Activated B cell treated with CpG ODN at 0.5 μM for 24 hours (primary cell): ENCODE measurements at regions of chr4 and their contacts with region 1.

Region 1: DNA sequence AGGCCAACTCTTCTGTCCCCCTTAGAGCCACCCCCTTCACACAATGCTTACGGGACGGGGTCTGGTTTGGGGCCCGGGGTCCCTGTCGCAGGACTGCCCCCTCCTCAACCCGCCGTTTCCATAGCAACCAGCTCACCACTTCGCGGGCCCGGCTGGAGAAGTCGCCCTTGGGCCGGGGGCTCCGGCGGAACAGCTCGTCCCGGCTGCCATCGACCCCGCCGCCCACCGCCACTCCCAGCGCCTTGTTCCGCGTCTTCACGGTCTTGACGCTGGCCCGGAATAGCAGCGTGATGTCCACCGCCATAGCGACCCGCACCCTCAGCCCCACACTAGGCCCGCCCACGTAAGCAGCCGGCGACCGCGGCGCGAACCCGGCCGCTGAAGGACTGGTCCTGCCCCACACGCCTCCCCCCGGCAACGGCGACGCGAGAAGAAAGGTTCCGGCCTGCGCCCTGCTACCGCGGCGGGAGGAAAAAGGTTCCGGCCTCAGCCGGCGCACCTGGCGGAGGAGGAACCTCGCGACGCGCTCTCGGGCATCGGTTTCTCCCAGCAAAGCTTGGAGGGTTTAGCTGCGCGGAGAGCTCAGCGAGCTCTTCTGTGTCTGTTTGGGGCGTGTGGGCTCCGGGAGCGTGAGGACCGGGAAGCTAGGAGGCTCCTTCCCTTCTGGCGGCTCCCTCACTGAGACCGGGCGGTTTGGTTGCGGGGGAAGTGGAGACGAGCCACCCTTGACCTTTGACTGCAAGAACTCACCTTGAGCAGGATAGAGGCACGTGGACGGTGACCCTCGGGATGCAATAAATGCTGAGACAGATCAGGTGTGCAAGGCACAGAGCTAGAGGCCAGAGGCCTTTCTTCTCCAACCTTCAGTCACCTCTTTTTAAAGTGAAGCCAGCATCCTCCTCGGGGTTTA is at the start of gene STX18:
- DNase-seq: peak; percentile 92
- ATAC-seq: peak; percentile 95
- H3K4me3 Mint-ChIP-seq: peak within 1 kb of the TSS; percentile 90
- H3K27ac Mint-ChIP-seq: peak within 1 kb of the TSS; percentile 88
- H3K4me1 Mint-ChIP-seq: peaks cover 42% of the 10 kb centered on the region
- H3K27me3 Mint-ChIP-seq: no peaks in the 10 kb centered on the region
- CTCF ChIP-seq: no peak
- total RNA-seq, gene STX18: 27.1 and 27.3 TPM in 2 replicates

Region 2: DNA sequence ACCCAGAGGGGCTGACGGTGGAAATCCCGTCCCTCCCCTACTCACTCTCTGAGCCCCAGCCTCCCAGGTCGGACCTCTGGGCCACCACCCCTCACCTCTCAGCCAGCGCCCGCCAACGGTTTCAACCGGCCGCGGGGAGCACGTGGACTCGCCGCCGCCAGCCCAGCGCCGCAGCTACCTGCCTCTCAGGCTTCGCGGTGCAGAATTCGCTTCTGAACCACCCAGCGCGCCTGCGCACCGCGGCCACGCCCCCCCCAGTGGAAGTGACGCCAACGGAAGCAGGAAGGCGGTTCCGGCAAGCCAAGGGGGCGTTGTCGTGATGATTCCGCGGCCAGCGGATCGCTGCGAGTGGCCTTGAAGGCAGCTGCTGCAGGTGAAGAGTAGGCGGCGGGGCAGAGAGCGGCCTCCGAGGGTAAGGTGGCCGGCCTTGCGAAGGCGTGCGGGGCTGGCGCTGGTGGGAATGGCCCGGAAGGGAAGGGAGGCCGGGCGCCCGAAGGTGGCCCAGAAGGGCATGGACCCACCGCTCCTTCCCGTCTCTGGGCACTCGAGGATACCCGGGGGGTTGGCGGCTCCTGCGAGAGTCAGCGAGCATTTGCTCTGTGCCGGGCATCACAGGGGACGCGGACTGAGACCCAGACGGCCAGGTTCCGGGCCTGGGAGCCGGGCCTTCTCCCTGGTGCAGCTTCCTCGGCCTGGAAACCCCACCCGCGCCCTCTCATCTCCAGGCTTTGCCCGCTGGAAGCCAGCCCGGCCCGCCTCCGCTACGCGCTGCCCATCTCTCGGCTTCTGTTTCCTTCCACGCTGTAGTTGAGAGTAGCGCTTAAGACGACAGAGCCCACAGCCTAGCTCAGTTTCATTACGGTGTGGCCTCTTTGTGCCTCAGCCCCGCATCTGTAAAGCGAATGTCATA is 251.7 kb before region 1 on chr4 and contains the starts of genes LYAR and ZBTB49:
- CTCF ChIA-PET with region 1: no interaction called
- POLR2A ChIA-PET with region 1: no interaction called
- intact Hi-C with region 1: loop called (anchors 1 kb)
- DNase-seq: peak; percentile 97
- ATAC-seq: peak; percentile 95
- H3K4me3 Mint-ChIP-seq: peak within 1 kb of the TSS; percentile 96
- H3K27ac Mint-ChIP-seq: peak within 1 kb of the TSS; percentile 72
- H3K4me1 Mint-ChIP-seq: peaks cover 36% of the 10 kb centered on the region
- H3K27me3 Mint-ChIP-seq: no peaks in the 10 kb centered on the region
- CTCF ChIP-seq: no peak
- total RNA-seq, gene LYAR: 15.9 and 20.9 TPM in 2 replicates
- total RNA-seq, gene ZBTB49: 7.2 and 11.6 TPM in 2 replicates

Region 3: DNA sequence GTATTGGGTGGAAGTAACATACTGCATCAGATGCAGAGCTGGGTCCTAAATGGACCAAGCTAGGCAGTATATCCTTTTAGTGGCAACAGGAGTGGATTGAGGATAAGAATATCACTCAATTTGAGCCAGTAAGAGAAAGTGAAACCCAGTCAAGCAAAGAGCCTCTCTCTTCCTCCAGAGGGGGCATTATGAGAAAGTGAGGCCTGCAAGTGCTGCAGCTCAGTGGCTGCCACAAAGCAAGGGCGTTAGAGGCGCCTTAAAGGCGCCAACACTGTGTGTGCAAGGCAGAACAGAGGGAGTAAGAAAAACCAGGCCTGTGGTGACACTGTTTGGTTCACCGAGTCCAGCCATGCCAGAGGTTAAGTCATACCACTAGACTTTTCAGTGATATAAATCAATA is 17.6 kb before region 1 on chr4:
- CTCF ChIA-PET with region 1: no interaction called
- POLR2A ChIA-PET with region 1: interaction called, 8 read pairs
- intact Hi-C with region 1: loop called (anchors 1 kb)
- DNase-seq: no peak
- ATAC-seq: peak; percentile 100
- H3K4me3 Mint-ChIP-seq: peak overlapping the region; percentile 62
- H3K27ac Mint-ChIP-seq: peak overlapping the region; percentile 75
- H3K4me1 Mint-ChIP-seq: peaks cover 31% of the 10 kb centered on the region
- H3K27me3 Mint-ChIP-seq: no peaks in the 10 kb centered on the region
- CTCF ChIP-seq: no peak